Activated CD8-positive, alpha-beta memory T cell treated with anti-CD3 and anti-CD28 coated beads, Interleukin-2, amount 10 ng/mL, durations not matched to agents 7 days and 5 days (primary cell): ENCODE measurements at regions of chr2 and their contacts with region 1.

Region 1: GRCh38 chr2:96174251-96175144 is 29.3 kb upstream of the DUSP2 start:
- DNase-seq: peak; percentile 88
- ATAC-seq: peak; percentile 99
- H3K4me3 Mint-ChIP-seq: no peak overlapping the region
- H3K27ac Mint-ChIP-seq: peak overlapping the region; percentile 3
- H3K4me1 Mint-ChIP-seq: peaks cover 5% of the 10 kb centered on the region
- H3K27me3 Mint-ChIP-seq: no peaks in the 10 kb centered on the region

Region 2: GRCh38 chr2:96072746-96073145 is 101.8 kb before region 1 on chr2:
- CTCF ChIA-PET with region 1: no interaction called
- DNase-seq: no peak
- ATAC-seq: no peak
- H3K4me3 Mint-ChIP-seq: no peak overlapping the region
- H3K27ac Mint-ChIP-seq: no peak overlapping the region
- H3K4me1 Mint-ChIP-seq: no peaks in the 10 kb centered on the region
- H3K27me3 Mint-ChIP-seq: peaks cover 9% of the 10 kb centered on the region

Region 3: GRCh38 chr2:96116879-96117697 is 57.4 kb before region 1 on chr2:
- CTCF ChIA-PET with region 1: interaction called, 29 read pairs
- DNase-seq: peak; percentile 63
- ATAC-seq: peak; percentile 85
- H3K4me3 Mint-ChIP-seq: peak overlapping the region; percentile 32
- H3K27ac Mint-ChIP-seq: no peak overlapping the region
- H3K4me1 Mint-ChIP-seq: peaks cover 27% of the 10 kb centered on the region
- H3K27me3 Mint-ChIP-seq: peaks cover 34% of the 10 kb centered on the region

Region 4: GRCh38 chr2:96145036-96145847 is 29.3 kb before region 1 on chr2 and contains the start of gene DUSP2:
- CTCF ChIA-PET with region 1: interaction called, 675 read pairs
- DNase-seq: peak; percentile 94
- ATAC-seq: peak; percentile 73
- H3K4me3 Mint-ChIP-seq: peak within 1 kb of the TSS; percentile 84
- H3K27ac Mint-ChIP-seq: peak within 1 kb of the TSS; percentile 91
- H3K4me1 Mint-ChIP-seq: peaks cover 65% of the 10 kb centered on the region
- H3K27me3 Mint-ChIP-seq: no peaks in the 10 kb centered on the region
- total RNA-seq, gene DUSP2: 32.0 to 53.6 TPM

Region 5: DNA sequence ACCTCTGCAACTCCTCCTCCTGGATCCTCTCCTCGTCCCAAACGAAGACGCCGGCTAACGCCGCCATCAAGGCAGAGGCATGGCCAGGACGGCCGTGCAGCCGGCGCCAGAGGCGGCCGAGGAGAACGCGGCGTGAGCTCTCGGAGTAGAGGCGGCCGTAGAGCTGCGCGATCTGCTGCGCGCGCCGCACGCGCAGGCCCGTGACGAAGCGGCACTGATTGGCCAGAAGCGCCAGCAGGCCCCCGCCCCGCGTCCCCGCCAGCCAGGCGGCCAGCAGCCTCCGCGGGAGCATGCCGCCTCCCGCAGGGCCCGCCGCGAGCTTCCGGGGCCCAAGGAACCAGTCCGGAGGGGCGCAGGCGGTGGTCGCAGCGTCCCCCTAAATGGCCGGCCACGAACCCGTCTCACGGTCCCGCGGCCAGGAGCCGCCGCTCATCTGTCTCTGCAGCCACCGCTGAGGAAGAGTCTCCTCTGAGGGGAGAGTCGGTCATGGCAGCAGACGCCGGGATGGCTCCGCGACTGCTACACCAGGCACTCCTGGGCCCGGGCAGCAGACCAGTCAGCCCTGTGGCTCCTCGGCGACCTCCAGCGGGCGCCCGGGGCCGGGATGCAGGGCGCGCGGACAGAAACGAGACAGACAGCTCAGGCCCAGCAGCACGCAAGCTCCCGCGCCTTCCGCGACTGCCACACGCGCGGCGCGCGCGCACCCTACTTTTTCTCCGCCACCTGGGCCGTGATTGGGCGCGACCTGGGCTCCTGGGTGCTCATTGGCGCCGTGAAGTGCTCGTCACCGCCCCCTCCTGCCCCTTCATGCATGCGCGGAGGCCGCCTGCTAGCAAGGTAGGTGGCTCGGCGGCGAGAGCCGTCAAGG is 33.9 kb after region 1 on chr2 and contains the start of gene STARD7:
- CTCF ChIA-PET with region 1: interaction called, 27 read pairs
- DNase-seq: peak; percentile 98
- ATAC-seq: peak; percentile 92
- H3K4me3 Mint-ChIP-seq: peak within 1 kb of the TSS; percentile 88
- H3K27ac Mint-ChIP-seq: peak within 1 kb of the TSS; percentile 88
- H3K4me1 Mint-ChIP-seq: peaks cover 49% of the 10 kb centered on the region
- H3K27me3 Mint-ChIP-seq: no peaks in the 10 kb centered on the region
- total RNA-seq, gene STARD7: 131 to 180 TPM